ENCODE measurements at regions of chr4 and their contacts with region 1.

Region 1: GRCh38 chr4:112302320-112303274 is 5.4 kb downstream of the ALPK1 start:
- DNase-seq: no peak
- ATAC-seq: peak; percentile 74
- H3K4me3 Mint-ChIP-seq: no peak overlapping the region
- H3K27ac Mint-ChIP-seq: no peak overlapping the region
- H3K4me1 Mint-ChIP-seq: peaks cover 30% of the 10 kb centered on the region
- H3K27me3 Mint-ChIP-seq: no peaks in the 10 kb centered on the region
- CTCF ChIP-seq: no peak

Region 2: GRCh38 chr4:112312610-112313239 is 10.1 kb after region 1 on chr4:
- CTCF ChIA-PET with region 1: interaction called, 11 read pairs
- POLR2A ChIA-PET with region 1: no interaction called
- intact Hi-C with region 1: no loop called
- DNase-seq: no peak
- ATAC-seq: no peak
- H3K4me3 Mint-ChIP-seq: no peak overlapping the region
- H3K27ac Mint-ChIP-seq: no peak overlapping the region
- H3K4me1 Mint-ChIP-seq: peaks cover 20% of the 10 kb centered on the region
- H3K27me3 Mint-ChIP-seq: no peaks in the 10 kb centered on the region
- CTCF ChIP-seq: no peak

Measured in activated CD8-positive, alpha-beta T cell treated with anti-CD3 and anti-CD28 coated beads for 36 hours (primary cell).